ENCODE measurements at regions of chr13 and their contacts with region 1.

Region 1: DNA sequence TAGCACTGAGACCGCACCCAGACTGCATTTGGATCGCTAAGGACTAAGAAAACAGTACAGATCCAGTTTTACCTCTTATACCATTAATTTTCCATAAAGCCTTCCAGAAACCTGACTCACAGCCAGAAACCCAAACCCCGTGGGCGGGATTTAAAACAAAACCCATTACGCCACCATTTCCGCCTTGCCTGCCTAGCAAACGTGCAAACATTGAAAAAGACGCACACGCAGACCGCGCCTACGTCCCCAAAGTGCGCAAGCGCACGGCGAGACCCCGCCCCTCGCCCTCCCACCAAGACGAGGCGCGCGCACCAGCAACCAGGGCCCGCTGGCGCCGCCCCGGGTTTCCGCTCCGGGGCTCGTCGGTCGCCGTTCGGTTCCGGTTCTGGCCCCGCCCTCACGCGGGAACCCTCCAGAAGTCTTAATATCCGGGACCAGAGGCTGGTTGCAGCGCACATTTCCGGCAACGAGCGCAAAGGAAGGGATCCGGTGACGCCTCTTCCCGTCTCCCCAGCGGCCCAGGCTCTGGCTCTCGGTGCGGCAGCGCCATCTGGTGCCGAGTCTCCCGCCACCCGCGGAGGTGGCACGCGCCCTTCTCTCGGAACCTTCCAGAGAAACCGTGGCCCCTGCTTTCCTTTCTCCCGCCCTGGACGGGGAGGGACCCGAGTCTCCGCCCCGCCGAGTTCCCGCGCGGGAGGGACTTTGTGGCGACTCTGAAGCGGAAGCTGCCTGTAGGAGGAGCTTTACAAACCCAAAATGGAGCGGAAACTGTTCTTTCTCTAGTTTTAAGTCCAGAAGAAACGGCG is 256.9 kb upstream of the STARD13 start:
- DNase-seq: peak; percentile 99

Region 2: DNA sequence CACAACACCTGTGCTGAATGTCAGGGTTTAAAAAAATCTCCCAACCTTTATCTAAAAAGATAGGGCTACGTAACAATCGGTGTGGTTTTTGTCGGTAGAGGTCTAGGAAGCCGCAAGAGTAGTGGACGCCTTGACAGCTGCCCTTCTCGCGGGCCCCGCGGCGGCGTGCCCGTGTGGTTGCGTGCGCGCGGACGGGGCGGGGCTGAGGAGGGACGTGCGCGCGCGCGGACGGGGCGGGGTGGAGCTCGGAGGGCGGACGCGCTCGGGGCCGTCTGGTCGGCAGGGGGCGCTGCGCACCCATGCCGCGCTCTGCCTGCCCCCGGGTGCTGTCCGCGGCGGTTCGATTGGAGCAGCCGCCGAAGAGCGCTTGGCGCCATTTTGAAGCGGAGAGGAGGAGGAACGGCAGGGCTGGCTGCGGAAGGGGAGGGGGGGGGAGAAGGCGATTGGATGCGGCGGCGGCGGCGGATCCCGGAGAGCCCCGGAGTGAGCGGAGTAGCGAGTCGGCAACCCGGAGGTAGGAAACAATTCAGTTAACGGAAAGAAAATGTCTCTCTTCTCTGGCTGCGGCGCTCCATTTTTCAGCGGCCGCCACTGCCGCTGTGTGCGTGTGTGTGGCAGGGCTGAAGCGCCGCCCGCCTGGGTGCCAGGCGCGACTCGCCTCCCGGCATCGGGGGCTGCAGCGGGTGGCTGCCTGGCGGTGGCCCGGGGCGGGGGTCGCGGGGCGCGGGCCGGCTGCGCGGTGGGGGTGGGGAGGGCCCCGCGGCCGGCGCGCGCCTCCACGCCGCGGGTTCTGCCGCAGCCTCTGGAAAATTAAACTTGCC is 956.2 kb before region 1 on chr13 and contains the start of gene PDS5B:
- intact Hi-C with region 1: loop called (anchors 2 kb)
- DNase-seq: peak; percentile 98
- total RNA-seq, gene PDS5B: 22.7 TPM

Region 3: GRCh38 chr13:33125821-33126570 is 416.5 kb before region 1 on chr13:
- intact Hi-C with region 1: loop called (anchors 1 kb)
- DNase-seq: no peak

Region 4: GRCh38 chr13:33285420-33286124 is 256.9 kb before region 1 on chr13 and contains the start of gene STARD13:
- intact Hi-C with region 1: loop called (anchors 1 kb)
- DNase-seq: peak; percentile 96
- total RNA-seq, gene STARD13: 26.9 TPM

Region 5: DNA sequence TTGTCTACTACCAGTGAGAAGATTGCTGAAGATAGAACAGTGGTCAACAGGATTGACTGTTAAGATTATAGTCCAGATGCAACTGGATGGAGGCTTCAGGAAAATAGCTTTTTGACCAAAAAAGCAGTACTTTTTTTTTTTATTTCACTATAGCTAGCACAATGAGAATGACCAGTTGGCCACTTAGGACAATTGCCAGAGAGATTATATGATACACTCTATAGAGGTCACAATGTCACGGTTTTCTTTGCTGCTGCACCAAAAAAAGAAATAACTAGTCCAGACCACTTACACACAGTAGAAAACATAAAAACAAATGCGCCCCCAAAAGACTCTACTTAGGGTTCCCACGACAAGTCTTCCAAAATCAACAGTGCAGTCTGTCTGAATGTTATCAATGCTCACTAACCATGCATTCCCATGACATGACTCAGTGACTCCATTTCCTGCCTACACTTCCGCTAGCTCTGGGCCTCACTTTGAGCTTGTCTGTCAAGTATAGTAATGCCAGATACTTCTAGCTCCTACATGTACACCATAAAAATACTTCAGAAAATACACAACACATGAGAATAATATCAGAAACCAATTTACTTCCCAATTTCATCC is 47.8 kb before region 1 on chr13:
- intact Hi-C with region 1: loop called (anchors 5 kb)
- DNase-seq: no peak

Region 6: GRCh38 chr13:33610471-33611015 is 68.1 kb after region 1 on chr13:
- intact Hi-C with region 1: loop called (anchors 2 kb)
- DNase-seq: peak; percentile 89

Region 7: GRCh38 chr13:33642374-33643068 is 100.0 kb after region 1 on chr13:
- intact Hi-C with region 1: no loop called
- DNase-seq: no peak